Natural killer cell (primary cell): ENCODE measurements at regions of chr10 and their contacts with region 1.

Region 1: GRCh38 chr10:63166742-63167258 is 33.7 kb downstream of the NRBF2 start:
- DNase-seq: peak in 1 of 2 donors; percentile 81
- ATAC-seq: peak; percentile 64 to 93 (median 77)
- H3K4me3 ChIP-seq: no peak overlapping the region
- H3K4me3 Mint-ChIP-seq: no peak overlapping the region
- H3K27ac ChIP-seq: no peak overlapping the region
- H3K27ac Mint-ChIP-seq: no peak overlapping the region
- H3K4me1 ChIP-seq: no peaks in the 10 kb centered on the region
- H3K4me1 Mint-ChIP-seq: peaks cover 6 to 7% of the 10 kb centered on the region in 2 donors
- H3K27me3 ChIP-seq: no peaks in the 10 kb centered on the region
- H3K27me3 Mint-ChIP-seq: no peaks in the 10 kb centered on the region
- CTCF ChIP-seq: peak; percentile 78

Region 2: DNA sequence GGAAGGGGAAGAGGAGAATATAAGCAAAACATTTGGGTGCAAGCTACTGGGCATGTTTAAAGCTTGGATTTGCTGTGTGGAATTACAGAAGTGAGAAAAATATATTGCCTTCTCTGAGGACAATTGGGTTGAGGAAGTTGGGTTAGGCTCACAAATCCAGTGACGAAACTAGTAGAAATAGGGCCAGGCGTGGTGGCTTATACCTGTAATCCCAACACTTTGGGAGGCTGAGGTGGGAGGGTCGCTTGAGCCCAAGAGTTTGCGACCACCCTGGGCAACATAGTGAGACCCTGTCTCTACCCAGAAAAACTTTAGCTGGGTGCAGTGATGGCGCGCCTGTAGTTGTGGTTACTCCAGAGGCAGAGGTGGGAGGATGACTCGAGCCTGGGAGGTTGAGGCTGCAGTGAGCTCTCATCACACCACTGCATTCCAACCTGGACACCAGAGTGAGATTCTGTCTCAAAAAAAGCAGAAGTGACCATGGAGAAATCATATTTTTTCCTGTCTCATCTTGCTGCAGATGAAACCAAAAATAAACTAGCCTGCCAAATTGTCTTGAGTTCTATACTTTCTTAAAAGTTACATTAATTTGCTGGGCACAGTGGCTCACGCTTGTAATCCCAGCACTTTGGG is 11.3 kb before region 1 on chr10:
- intact Hi-C with region 1: no loop called
- DNase-seq: no peak
- ATAC-seq: no peak
- H3K4me3 ChIP-seq: no peak overlapping the region
- H3K4me3 Mint-ChIP-seq: no peak overlapping the region
- H3K27ac ChIP-seq: no peak overlapping the region
- H3K27ac Mint-ChIP-seq: no peak overlapping the region
- H3K4me1 ChIP-seq: no peaks in the 10 kb centered on the region
- H3K4me1 Mint-ChIP-seq: peaks cover 6 to 15% of the 10 kb centered on the region in 2 donors
- H3K27me3 ChIP-seq: no peaks in the 10 kb centered on the region
- H3K27me3 Mint-ChIP-seq: no peaks in the 10 kb centered on the region
- CTCF ChIP-seq: no peak

Region 3: DNA sequence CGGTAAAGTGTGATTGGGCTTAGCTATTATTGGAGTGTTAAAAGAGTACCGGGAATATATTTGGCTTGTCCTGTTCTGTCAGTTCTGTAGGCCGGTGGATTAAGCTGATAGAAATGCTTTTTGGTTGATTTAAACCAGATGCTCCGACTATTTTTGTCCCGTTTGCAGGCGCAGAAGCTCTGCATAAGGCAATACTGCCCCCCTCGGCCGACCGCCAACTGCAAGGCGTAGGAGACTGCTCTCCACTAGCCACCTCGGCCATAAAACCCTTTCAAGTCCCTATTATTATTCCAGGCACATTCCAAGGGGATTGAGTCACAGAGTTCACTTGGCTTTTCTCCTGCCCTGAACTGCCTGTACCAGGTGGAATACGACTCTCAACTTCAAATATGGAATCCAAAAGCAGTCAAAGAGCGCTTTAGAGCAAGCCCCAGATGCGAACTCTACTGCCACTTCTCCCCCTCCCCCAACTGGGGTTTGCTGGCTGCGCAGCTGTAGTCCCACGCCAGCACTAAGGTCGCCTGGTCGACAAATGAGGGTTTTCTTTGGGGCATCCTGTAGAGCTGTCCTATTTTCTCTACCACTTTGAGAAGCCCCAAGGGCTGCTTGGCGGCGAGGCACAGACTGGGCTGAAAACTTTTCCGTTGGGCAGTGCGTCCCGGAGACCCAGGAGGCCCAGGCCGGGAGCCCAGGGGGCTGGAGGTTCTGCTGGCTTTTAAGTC is 462.7 kb after region 1 on chr10:
- intact Hi-C with region 1: loop called (anchors 1 kb)
- DNase-seq: peak; percentile 60 to 86
- ATAC-seq: peak; percentile 76 to 85 (median 83)
- H3K4me3 ChIP-seq: peak overlapping the region; percentile 77
- H3K4me3 Mint-ChIP-seq: peak overlapping the region; percentile 99
- H3K27ac ChIP-seq: peak overlapping the region; percentile 42
- H3K27ac Mint-ChIP-seq: peak overlapping the region; percentile 14 to 53
- H3K4me1 ChIP-seq: peaks cover 21% of the 10 kb centered on the region
- H3K4me1 Mint-ChIP-seq: peaks cover 22 to 27% of the 10 kb centered on the region in 2 donors
- H3K27me3 ChIP-seq: no peaks in the 10 kb centered on the region
- H3K27me3 Mint-ChIP-seq: peaks cover 5 to 8% of the 10 kb centered on the region in 2 donors
- CTCF ChIP-seq: peak; percentile 70

Region 4: GRCh38 chr10:63720072-63720537 is 553.3 kb after region 1 on chr10:
- intact Hi-C with region 1: loop called (anchors 1 kb)
- DNase-seq: peak in 1 of 2 donors; percentile 78
- ATAC-seq: peak; percentile 62 to 82 (median 76)
- H3K4me3 ChIP-seq: no peak overlapping the region
- H3K4me3 Mint-ChIP-seq: peak overlapping the region; percentile 25
- H3K27ac ChIP-seq: no peak overlapping the region
- H3K27ac Mint-ChIP-seq: no peak overlapping the region
- H3K4me1 ChIP-seq: peaks cover 4% of the 10 kb centered on the region
- H3K4me1 Mint-ChIP-seq: peaks cover 5 to 8% of the 10 kb centered on the region in 2 donors
- H3K27me3 ChIP-seq: no peaks in the 10 kb centered on the region
- H3K27me3 Mint-ChIP-seq: peaks cover 8 to 19% of the 10 kb centered on the region in 2 donors
- CTCF ChIP-seq: peak; percentile 99